ENCODE measurements at regions of chr21 and their contacts with region 1.

Region 1: GRCh38 chr21:32612075-32612998 is at the start of gene CFAP298:
- DNase-seq: peak; percentile 96
- H3K4me3 Mint-ChIP-seq: peak within 1 kb of the TSS; percentile 99
- H3K27ac Mint-ChIP-seq: peak within 1 kb of the TSS; percentile 96
- H3K4me1 Mint-ChIP-seq: peaks cover 7% of the 10 kb centered on the region
- H3K27me3 Mint-ChIP-seq: peaks cover 5% of the 10 kb centered on the region
- total RNA-seq, gene CFAP298: 52.5 and 57.6 TPM in 2 replicates

Region 2: DNA sequence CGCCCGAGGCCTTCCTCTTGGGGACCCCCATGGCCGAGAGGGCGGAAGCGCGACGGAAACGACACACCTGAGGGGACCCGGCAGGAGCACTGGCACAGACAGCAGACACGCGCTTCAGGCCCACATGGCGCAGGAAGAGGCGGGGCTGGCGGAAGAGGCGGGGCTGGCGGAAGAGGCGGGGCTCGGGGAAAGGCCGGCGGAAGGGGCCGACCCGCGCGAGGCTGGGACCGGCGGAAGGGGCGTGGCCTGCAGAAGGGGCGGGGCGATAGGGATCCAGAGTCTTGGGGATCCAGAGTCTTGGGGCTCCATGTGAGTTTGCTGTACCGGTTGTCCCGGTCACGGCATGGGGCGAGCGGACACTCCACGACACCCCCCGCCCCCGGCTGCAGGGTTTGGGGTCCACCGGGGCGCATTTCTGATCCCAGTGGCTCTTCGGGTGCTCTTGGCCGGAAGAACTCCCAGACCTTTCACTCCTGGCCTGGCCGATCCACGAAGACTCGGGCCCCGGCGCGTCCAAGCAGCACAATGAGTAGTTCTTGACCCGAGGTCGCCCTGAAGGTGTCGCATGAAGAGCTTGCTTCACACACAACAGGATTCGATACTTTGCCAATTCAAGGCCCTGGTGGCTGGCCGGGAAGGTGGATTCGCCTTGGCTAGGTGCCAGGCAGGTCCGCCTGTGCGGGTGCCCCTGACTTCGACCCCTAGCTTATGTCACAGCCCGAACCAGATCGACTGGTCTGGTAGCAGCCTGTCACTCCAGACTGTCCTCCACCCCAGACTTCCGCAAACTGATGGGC is 219.3 kb before region 1 on chr21 and contains the start of gene URB1:
- intact Hi-C with region 1: loop called (anchors 1 kb)
- DNase-seq: peak; percentile 99
- H3K4me3 Mint-ChIP-seq: peak within 1 kb of the TSS; percentile 93
- H3K27ac Mint-ChIP-seq: peak within 1 kb of the TSS; percentile 89
- H3K4me1 Mint-ChIP-seq: peaks cover 30% of the 10 kb centered on the region
- H3K27me3 Mint-ChIP-seq: peaks cover 8% of the 10 kb centered on the region
- total RNA-seq, gene URB1: 39.2 and 41.7 TPM in 2 replicates

Region 3: GRCh38 chr21:32597205-32597604 is 15.1 kb before region 1 on chr21:
- intact Hi-C with region 1: loop called (anchors 1 kb)
- DNase-seq: no peak
- H3K4me3 Mint-ChIP-seq: no peak overlapping the region
- H3K27ac Mint-ChIP-seq: peak overlapping the region; percentile 10
- H3K4me1 Mint-ChIP-seq: peaks cover 6% of the 10 kb centered on the region
- H3K27me3 Mint-ChIP-seq: no peaks in the 10 kb centered on the region

Region 4: DNA sequence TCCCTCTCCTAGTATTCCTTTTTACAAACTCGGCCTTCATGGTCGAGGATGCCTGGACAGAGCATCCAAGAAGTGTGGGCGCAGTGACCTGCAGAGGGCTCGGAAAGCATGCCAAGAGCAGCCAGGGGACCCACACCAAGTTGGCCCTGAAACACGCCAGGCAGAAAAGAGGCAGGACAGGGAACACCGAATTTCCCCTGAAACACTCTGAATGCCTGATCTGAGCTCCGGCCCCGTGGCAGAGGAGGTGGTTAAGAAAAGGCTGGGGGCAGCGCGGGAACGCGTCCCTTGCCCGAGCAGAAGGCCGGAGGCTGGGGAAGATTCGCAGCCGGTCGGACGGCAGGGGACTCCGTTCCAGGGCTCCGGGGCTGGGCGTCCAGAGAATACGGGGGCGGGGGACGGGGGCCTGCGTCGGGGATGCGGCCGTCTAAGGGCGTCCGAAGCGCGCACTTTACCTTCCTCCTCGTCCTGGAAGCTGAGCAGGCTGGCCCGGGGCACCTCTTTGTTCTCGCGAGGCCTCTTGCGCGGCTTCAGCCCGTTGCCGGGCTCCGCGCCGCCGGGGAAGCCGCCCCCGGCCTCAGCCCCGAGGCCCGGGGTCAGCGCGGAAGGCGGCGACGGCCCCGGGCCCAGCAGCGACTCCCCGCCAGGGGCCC is 158.7 kb after region 1 on chr21:
- intact Hi-C with region 1: loop called (anchors 1 kb)
- DNase-seq: peak; percentile 88
- H3K4me3 Mint-ChIP-seq: peak overlapping the region; percentile 99
- H3K27ac Mint-ChIP-seq: peak overlapping the region; percentile 92
- H3K4me1 Mint-ChIP-seq: peaks cover 46% of the 10 kb centered on the region
- H3K27me3 Mint-ChIP-seq: peaks cover 3% of the 10 kb centered on the region